ENCODE measurements at regions of chr20 and their contacts with region 1.

Region 1: GRCh38 chr20:53722515-53723444 is 129.1 kb upstream of the ZNF217 start:
- DNase-seq: no peak
- H3K4me3 Mint-ChIP-seq: no peak overlapping the region
- H3K27ac Mint-ChIP-seq: no peak overlapping the region
- H3K4me1 Mint-ChIP-seq: no peaks in the 10 kb centered on the region
- H3K27me3 Mint-ChIP-seq: no peaks in the 10 kb centered on the region
- CTCF ChIP-seq: no peak

Region 2: DNA sequence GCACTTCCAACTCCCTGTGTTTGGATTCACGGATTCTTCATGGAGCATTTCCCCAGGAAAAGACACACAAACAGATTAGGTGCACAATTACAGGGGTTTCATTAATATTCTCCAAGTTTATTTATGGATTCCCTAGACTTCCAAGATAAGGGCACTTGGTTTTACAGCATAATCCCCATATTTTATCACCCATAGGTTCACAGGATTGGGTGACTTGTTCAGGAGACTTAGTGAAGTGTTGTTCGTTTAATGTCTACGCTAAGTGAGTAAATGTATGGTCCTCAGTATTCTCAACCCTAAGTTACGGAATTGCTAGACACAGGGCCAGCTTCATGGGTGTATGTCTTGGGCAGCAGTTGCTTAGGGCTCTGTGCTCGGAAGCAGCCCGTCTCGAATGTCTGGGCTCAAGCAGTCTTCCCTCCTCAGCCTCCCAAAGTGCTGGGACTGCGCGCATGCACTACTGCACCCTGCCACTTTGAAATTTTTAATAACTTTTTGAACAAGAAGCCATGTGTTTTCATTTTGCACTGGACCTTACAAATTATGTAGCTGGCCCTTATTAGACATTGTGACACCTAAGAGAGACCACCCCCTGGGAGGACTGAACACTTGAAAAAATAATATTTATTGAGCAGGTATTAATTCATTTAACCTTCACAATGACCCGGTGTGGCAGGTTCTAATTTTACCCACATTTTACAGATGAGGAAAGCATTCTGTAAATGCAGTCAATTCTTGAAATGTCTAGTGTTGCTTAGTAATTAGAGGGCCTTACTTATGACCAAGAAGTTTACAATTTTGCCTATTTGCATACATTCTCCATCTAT is 37.6 kb before region 1 on chr20:
- CTCF ChIA-PET with region 1: interaction called, 10 read pairs
- intact Hi-C with region 1: no loop called
- DNase-seq: no peak
- H3K4me3 Mint-ChIP-seq: no peak overlapping the region
- H3K27ac Mint-ChIP-seq: no peak overlapping the region
- H3K4me1 Mint-ChIP-seq: peaks cover 8% of the 10 kb centered on the region
- H3K27me3 Mint-ChIP-seq: no peaks in the 10 kb centered on the region
- CTCF ChIP-seq: no peak

Region 3: GRCh38 chr20:53699958-53700305 is 22.8 kb before region 1 on chr20:
- CTCF ChIA-PET with region 1: no interaction called
- intact Hi-C with region 1: no loop called
- DNase-seq: no peak
- H3K4me3 Mint-ChIP-seq: no peak overlapping the region
- H3K27ac Mint-ChIP-seq: peak overlapping the region; percentile 8
- H3K4me1 Mint-ChIP-seq: peaks cover 22% of the 10 kb centered on the region
- H3K27me3 Mint-ChIP-seq: no peaks in the 10 kb centered on the region
- CTCF ChIP-seq: no peak

Region 4: GRCh38 chr20:53748176-53748575 is 25.4 kb after region 1 on chr20:
- CTCF ChIA-PET with region 1: no interaction called
- intact Hi-C with region 1: no loop called
- DNase-seq: no peak
- H3K4me3 Mint-ChIP-seq: no peak overlapping the region
- H3K27ac Mint-ChIP-seq: peak overlapping the region; percentile 28
- H3K4me1 Mint-ChIP-seq: peaks cover 51% of the 10 kb centered on the region
- H3K27me3 Mint-ChIP-seq: no peaks in the 10 kb centered on the region
- CTCF ChIP-seq: no peak

Region 5: GRCh38 chr20:54044156-54044555 is 321.4 kb after region 1 on chr20:
- CTCF ChIA-PET with region 1: no interaction called
- intact Hi-C with region 1: no loop called
- DNase-seq: no peak
- H3K4me3 Mint-ChIP-seq: no peak overlapping the region
- H3K27ac Mint-ChIP-seq: no peak overlapping the region
- H3K4me1 Mint-ChIP-seq: no peaks in the 10 kb centered on the region
- H3K27me3 Mint-ChIP-seq: peaks cover 25% of the 10 kb centered on the region
- CTCF ChIP-seq: no peak